Vagina (tissue), 2 donors: ENCODE measurements at regions of chr1 and their contacts with region 1.

Region 1: DNA sequence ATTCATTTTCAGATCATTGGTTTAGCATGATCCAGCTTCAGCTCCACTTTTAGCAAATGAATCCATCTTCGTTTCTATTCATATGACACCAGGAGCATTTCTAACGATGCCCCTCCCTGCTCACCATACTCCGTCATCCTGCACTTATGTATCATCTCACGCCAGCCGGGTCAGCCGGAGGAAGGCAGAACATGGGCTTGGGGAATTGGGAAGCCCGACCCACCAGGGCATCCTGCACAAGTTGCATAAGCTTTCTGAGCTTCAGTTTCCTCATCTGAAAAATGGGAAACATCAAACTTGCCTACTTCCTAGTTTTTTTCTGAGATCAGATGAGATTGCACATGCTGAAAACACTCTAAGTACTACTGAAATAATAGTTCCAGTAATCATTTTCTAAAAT is 194.7 kb downstream of the AK5 start:
- DNase-seq: no peak
- H3K4me3 ChIP-seq: no peak overlapping the region
- H3K27ac ChIP-seq: no peak overlapping the region
- H3K4me1 ChIP-seq: no peaks in the 10 kb centered on the region
- H3K27me3 ChIP-seq: no peaks in the 10 kb centered on the region
- CTCF ChIP-seq: no peak
- POLR2A ChIP-seq: no peak

Region 2: GRCh38 chr1:75632350-75632949 is 1844.0 kb before region 1 on chr1:
- intact Hi-C with region 1: no loop called
- DNase-seq: no peak
- H3K4me3 ChIP-seq: no peak overlapping the region
- H3K27ac ChIP-seq: no peak overlapping the region
- H3K4me1 ChIP-seq: no peaks in the 10 kb centered on the region
- H3K27me3 ChIP-seq: no peaks in the 10 kb centered on the region
- CTCF ChIP-seq: peak in 2 of 3 experiments; percentile 29 to 42
- POLR2A ChIP-seq: no peak

Region 3: DNA sequence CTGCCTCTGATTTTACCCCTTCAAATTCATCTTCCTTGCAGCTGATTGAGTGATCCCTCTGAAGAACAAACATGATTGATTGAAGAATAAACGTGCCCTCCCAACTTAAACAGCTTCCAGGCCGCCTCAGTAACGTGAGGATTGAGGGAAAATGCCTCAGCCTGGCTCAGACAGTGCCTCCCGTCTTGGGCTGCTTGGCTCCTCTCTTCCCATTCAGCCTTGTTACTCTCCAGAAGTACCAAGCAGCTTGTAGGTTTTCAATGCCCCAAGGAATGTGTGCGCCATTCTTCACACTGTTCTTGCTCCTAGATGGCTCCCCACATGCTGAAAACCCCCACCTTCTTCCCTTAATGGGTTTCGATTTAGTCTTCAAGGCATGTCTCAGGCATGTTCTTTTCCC is 557.4 kb before region 1 on chr1:
- intact Hi-C with region 1: loop called (anchors 5 kb)
- DNase-seq: no peak
- H3K4me3 ChIP-seq: no peak overlapping the region
- H3K27ac ChIP-seq: no peak overlapping the region
- H3K4me1 ChIP-seq: no peaks in the 10 kb centered on the region
- H3K27me3 ChIP-seq: no peaks in the 10 kb centered on the region
- CTCF ChIP-seq: no peak
- POLR2A ChIP-seq: no peak